AG04449 (cell line): ENCODE measurements at regions of chr9 and their contacts with region 1.

Region 1: DNA sequence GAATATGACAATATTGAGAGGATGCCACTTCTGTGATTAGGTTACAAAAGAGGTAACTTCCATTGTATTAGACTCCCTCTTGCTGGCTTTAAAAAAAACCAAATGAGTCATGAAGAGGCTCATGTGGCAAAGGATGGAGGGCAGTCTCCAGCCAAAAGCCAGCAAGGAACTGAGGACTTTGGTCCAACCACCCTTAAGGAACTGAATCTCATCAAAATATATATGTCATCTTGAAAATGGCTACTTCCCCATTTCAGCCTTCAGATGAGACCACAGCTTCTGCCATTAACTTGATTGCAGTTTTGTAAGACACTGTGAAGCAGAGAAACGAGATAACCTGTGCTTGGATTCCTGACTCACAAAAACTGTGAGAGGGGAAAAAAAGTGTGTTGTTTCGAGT is 15.5 kb upstream of the TRIM32 start:
- DNase-seq: no peak
- H3K4me3 ChIP-seq: no peak overlapping the region
- CTCF ChIP-seq: no peak

Region 2: DNA sequence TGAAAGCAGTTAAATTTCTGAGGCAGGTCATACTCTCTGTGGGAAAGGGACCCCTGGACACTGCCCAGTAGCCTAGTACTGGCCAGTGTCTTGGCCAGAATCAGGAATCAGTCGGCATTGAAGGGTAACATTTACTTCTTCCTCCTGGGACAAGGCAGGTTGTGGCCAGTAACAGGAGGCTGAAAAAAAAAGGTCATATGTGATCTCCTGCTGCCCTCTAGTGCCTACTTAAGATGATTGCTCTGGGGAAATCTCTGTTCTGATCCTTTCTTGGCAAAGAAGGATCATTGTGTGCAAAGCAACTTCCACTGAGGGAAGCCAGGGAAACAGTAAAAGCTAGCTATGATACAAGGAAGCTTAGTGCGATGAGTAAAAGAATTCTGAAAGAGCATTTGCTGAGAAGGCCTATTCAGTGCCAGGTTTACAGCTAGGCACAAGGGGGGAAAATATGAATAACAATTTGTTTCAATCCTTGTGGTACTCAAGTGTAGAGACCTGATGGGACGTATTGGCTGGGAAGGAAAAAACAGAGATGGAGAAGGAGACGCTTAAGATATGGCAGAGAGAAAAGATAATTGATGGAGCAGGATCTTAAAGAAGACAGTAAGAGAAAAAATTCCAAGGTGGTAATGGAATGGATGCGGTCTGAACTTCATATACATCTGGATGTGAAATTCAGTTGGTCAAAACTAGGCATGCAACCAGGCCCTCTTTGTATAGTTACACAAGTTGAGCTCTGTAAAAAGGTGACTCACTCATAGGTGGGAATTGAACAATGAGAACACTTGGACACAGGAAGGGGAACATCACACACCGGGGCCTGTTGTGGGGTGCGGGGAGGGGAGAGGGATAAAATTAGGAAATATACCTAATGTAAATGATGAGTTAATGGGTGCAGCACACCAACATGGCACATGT is 10.3 kb before region 1 on chr9:
- CTCF ChIA-PET with region 1: interaction called, 12 read pairs
- POLR2A ChIA-PET with region 1: no interaction called
- DNase-seq: peak; percentile 61
- H3K4me3 ChIP-seq: no peak overlapping the region
- CTCF ChIP-seq: peak; percentile 74